ENCODE measurements at regions of chr3 and their contacts with region 1.

Region 1: GRCh38 chr3:144770915-144771351 is 799.3 kb downstream of the DIPK2A start:
- DNase-seq: peak in 1 of 10 donors; percentile 22
- H3K4me3 ChIP-seq: peak overlapping the region in 2 of 59 donors; percentile 9
- H3K27ac ChIP-seq: peak overlapping the region in 58 of 59 donors; percentile 7 to 90 (median 78)
- H3K27me3 ChIP-seq: no peaks in the 10 kb centered on the region
- CTCF ChIP-seq: peak; percentile 54 to 87 (median 70)

Region 2: GRCh38 chr3:144660186-144660585 is 110.7 kb before region 1 on chr3:
- intact Hi-C with region 1: loop called (anchors 5 to 10 kb)
- DNase-seq: no peak
- H3K4me3 ChIP-seq: no peak overlapping the region
- H3K27ac ChIP-seq: peak overlapping the region in 6 of 59 donors; percentile 1 to 55 (median 18)
- H3K27me3 ChIP-seq: no peaks in the 10 kb centered on the region
- CTCF ChIP-seq: no peak

Measured in dorsolateral prefrontal cortex (tissue), 120 donors.